ENCODE measurements at regions of chr16 and their contacts with region 1.

Region 1: DNA sequence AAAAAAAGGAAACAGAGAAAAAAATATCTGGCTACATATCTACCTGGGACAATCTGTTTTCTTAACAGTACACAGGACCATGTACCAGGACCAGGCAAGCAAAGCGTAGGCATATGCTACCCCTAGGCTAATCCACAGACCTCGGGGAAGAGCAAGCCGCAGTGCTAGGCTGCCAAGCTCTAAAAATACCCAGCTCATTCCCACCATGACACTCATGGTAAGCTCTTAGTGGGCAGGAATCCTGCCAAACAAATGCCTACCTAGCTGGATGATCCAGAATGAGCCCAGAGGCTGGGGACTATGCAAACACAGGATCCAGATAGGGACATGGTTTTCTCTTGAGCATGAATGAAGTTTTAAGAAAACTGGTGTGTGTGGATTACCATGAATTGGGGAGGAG is 95.6 kb downstream of the GRIN2A start:
- DNase-seq: no peak
- ATAC-seq: no peak
- H3K4me3 Mint-ChIP-seq: no peak overlapping the region
- H3K27ac Mint-ChIP-seq: no peak overlapping the region
- H3K4me1 Mint-ChIP-seq: no peaks in the 10 kb centered on the region
- H3K27me3 Mint-ChIP-seq: peaks cover 27% of the 10 kb centered on the region
- CTCF ChIP-seq: no peak

Region 2: DNA sequence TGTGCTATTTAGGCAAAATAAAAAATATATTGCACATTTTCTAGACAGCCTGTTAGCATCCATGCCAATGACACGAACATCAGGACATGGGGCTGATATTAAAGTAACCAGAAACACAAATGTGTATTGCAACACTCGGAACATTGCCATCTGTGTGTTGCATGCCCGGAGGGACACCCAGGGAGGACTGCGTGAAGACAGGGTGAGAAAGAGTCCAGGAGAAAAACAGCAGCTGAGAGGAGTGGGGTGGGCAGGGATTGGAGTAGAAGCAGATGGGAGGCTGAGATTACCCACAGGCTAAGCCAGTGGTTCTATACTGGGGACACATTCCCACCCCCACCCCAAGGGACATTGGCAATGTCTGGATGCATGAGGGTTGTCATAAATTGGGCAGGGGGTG is 19.2 kb before region 1 on chr16:
- CTCF ChIA-PET with region 1: no interaction called
- POLR2A ChIA-PET with region 1: interaction called, 10 read pairs
- intact Hi-C with region 1: no loop called
- DNase-seq: no peak
- ATAC-seq: no peak
- H3K4me3 Mint-ChIP-seq: no peak overlapping the region
- H3K27ac Mint-ChIP-seq: no peak overlapping the region
- H3K4me1 Mint-ChIP-seq: no peaks in the 10 kb centered on the region
- H3K27me3 Mint-ChIP-seq: peaks cover 11% of the 10 kb centered on the region
- CTCF ChIP-seq: no peak

Measured in activated B cell treated with CpG ODN at 0.5 μM for 24 hours (primary cell).